HEK293T (cell line): ENCODE measurements at regions of chr4 and their contacts with region 1.

Region 1: GRCh38 chr4:147866532-147867271 is 134.8 kb downstream of the ARHGAP10 start:
- DNase-seq: peak; percentile 75

Region 2: DNA sequence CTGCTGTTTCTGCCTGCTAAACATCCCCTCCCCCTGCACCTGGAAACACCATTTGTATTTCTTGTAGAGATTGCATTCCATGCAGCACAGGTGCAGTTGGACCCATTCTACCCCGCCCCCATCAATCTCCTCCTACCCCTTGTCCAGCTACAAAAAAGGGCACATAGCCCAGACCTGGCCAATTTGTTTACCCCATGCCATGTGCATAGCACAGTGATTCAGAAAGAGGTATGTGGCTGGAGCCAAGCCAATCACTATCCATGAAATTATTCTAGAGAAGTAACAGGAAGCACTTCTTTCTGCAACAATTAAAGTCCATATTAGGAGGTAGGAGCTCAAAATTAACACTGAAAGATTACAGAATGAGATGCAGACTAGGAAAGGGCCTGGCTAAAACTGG is 269.7 kb before region 1 on chr4:
- CTCF ChIA-PET with region 1: interaction called, 19 read pairs
- POLR2A ChIA-PET with region 1: no interaction called
- DNase-seq: no peak

Region 3: DNA sequence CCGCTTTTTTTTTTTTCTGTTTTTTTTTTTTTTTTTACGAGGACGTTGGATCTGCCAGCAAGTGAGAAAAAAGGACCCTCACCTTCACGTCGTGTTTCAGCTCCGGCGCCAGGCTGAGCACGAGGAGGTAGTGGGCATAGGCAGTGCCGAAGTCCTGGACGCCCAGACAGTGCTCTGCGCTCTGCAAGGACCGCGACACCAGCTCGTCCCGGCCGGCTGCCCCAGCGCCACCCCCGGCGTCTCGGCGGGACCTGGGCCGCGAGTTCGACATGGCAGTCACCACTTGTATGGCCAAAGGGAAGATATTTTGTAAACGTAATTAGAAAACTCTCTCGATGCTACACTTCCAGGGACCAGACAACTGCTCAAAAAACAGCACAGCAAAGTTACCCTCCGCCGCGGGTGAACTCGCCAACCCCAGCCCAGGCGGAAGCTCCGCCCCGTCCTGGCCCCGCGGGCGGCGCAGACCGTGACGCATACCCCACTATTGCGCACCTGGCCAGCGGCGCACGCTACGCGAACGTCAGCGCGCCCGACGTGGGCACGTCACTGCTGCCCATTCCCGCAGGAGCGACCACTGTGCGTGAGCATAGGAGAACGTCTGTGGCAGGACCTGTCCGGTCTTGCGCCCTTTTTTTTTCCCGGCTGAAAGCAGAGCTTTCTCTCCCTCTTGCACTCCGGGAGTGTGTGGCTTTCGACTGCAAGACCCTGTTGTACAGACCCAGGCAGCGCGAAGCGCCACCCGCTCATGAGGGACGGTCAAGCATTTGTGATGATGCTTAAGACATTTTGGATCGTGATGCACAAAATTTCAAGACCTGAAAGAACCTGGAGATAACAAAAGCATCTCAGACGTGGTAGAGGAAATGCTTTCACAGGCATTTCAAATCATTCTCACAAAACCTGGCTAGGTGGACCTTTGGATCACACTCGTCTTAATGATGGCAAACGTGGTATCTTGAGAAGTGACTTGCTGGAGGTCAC is 182.7 kb before region 1 on chr4 and contains the start of gene PRMT9:
- CTCF ChIA-PET with region 1: interaction called, 19 read pairs
- POLR2A ChIA-PET with region 1: interaction called, 17 read pairs
- DNase-seq: peak; percentile 93

Region 4: DNA sequence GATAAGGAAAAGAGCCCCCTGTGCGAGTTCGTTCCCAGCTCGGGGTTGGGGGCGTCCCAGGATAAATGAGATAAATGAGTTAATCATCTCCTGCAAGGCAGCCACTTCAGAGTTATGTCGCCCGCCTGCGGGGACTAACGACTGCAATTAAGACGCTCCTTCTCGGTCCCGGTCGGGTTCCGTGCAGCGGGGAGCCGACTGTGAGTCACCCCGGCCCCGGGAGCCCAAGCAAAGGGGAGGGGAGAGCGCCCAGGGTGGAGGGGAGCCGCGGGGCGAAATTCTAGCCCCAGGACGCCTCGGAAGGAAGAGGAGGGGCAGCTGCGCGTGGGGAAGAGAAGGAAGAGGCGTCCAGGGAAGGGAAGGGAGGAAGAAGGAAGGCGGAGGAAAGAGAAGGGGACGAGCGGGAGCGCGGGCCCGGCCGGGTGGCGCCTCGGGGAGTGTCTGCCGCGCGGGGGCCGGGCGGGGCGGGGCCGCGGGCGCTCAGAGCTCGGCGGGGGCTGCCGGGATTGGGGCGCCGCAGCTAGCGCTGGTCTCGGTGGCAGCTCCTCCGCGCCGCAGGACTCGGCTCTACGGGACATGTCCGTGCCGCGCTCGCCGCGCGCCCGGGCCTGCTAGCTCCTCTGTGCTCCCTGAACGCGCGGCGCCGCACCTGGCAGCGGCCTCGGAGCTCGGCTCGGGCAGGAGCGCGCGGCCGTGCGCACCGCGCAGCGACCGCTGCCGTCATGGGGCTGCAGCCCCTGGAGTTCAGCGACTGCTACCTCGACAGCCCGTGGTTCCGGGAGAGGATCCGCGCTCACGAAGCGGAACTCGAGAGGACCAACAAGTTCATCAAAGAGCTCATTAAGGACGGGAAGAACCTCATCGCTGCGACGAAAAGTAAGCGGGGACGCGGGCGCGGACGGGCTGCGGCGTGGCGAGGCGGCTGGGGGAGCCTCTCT is 134.9 kb before region 1 on chr4 and contains the start of gene ARHGAP10:
- CTCF ChIA-PET with region 1: interaction called, 28 read pairs
- POLR2A ChIA-PET with region 1: interaction called, 6 read pairs
- DNase-seq: peak; percentile 53

Region 5: DNA sequence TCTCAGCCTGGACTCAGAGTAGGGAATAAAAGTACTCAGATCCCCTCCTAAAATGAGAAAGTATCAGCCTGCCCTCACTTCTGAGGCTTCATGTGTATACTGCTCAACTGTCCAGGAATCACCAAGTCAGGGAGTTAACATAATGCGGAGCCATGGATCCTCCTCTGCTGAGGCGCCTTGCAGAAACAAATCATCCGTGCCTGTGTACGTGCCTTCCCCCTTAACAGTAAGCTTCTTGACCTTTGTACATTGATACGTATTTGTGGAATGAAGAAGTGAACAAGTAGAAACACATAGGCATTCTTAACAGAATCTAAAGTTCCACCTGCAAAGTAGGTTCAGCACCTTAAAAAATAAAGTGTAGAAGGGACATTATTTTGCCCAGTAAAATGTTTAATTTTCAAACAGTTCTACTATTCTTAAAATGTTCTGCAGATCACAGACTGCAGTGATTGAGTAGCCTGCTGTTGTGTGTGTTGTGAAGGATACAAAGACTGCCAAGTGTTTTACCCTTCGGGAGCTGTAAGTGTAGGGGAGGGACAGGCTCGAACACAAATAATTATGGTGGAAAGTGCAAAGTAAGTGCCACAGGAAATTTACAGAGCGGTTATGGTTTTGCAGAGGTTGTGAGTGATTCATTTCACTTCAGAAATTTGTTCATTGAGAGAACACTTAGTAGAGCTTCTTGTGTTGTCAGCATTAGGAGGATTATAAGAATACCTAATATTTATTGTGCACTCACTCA is 73.0 kb before region 1 on chr4:
- CTCF ChIA-PET with region 1: interaction called, 17 read pairs
- POLR2A ChIA-PET with region 1: no interaction called
- DNase-seq: no peak

Region 6: GRCh38 chr4:147846318-147847155 is 20.2 kb before region 1 on chr4:
- CTCF ChIA-PET with region 1: interaction called, 14 read pairs
- POLR2A ChIA-PET with region 1: no interaction called
- DNase-seq: no peak